Activated naive CD4-positive, alpha-beta T cell treated with anti-CD3 and anti-CD28 coated beads for 36 hours (primary cell): ENCODE measurements at regions of chr17 and their contacts with region 1.

Region 1: GRCh38 chr17:27601069-27601975 is 29.7 kb upstream of the LGALS9 start:
- DNase-seq: peak; percentile 91
- H3K4me3 Mint-ChIP-seq: no peak overlapping the region
- H3K27ac Mint-ChIP-seq: no peak overlapping the region
- H3K4me1 Mint-ChIP-seq: peaks cover 11% of the 10 kb centered on the region
- H3K27me3 Mint-ChIP-seq: no peaks in the 10 kb centered on the region

Region 2: DNA sequence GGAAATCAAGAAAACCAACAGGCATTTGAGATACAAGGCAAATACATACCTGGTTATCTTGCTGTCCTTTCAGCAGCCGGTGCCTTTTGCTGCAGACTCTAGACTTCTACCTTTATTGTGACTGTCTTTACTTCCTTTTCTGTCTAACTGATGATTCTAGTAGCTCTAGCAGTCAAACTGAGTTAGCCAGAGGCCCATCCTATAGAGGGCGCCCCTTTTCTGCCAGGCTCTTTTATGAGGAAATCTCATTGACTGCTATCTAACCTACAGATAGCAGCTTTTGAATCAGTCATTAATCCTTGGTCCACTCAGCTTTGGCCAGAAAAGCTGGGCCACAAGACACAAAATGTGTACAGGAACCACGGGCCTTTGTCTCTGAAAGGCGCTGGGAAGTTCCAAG is 394.9 kb before region 1 on chr17:
- CTCF ChIA-PET with region 1: no interaction called
- intact Hi-C with region 1: no loop called
- DNase-seq: peak; percentile 30
- H3K4me3 Mint-ChIP-seq: no peak overlapping the region
- H3K27ac Mint-ChIP-seq: no peak overlapping the region
- H3K4me1 Mint-ChIP-seq: peaks cover 5% of the 10 kb centered on the region
- H3K27me3 Mint-ChIP-seq: peaks cover 4% of the 10 kb centered on the region

Region 3: DNA sequence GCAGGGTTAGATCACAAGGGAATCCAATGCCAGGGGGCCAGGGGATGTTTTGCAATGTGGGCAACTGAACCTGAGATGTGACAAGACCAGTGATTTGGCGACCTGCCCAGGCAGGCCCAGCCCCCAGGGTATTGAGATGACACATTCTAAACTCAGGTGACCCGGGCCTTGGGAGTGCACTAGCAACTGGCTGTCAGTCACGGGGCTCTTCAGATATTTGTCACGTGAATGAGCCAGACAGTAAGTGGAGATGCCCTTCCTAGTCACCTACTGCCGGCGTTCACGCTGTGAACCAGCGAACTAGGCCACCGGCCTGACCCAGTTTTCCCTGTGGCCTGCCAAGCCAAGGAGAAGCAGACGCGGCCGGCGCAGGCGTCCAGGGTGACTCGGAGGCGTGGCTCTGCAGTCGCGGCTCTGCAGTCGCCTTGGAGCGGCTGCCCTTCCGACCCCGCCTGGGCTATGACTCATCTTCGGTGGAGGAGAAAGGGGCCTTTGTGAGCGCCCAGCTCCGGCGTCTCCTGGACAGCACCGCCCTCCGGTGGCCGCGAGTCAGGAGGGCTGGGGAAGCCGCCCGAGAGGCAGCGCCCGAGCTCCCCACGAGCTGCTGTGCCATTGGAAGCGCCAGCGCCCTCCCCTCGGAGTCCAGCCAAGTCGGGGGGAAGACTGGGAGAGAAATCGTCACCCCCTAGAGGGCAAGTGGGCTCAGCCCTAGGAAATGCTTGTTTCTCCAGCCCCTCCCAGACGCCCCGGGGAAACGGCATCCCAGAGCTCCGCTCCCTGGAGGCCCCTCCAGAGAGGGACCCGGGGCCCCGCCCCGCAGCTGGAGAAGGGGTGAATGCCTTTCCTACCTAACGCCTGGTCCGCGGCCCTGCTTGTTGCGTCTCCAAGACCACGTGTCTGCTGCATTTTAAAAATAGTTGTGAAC is 268.6 kb before region 1 on chr17:
- CTCF ChIA-PET with region 1: interaction called, 11 read pairs
- intact Hi-C with region 1: loop called (anchors 1 kb)
- DNase-seq: peak; percentile 97
- H3K4me3 Mint-ChIP-seq: peak overlapping the region; percentile 75
- H3K27ac Mint-ChIP-seq: peak overlapping the region; percentile 74
- H3K4me1 Mint-ChIP-seq: peaks cover 20% of the 10 kb centered on the region
- H3K27me3 Mint-ChIP-seq: peaks cover 3% of the 10 kb centered on the region

Region 4: GRCh38 chr17:27381007-27381501 is 220.3 kb before region 1 on chr17:
- CTCF ChIA-PET with region 1: interaction called, 108 read pairs
- intact Hi-C with region 1: loop called (anchors 1 kb)
- DNase-seq: peak; percentile 87
- H3K4me3 Mint-ChIP-seq: no peak overlapping the region
- H3K27ac Mint-ChIP-seq: no peak overlapping the region
- H3K4me1 Mint-ChIP-seq: no peaks in the 10 kb centered on the region
- H3K27me3 Mint-ChIP-seq: peaks cover 24% of the 10 kb centered on the region

Region 5: DNA sequence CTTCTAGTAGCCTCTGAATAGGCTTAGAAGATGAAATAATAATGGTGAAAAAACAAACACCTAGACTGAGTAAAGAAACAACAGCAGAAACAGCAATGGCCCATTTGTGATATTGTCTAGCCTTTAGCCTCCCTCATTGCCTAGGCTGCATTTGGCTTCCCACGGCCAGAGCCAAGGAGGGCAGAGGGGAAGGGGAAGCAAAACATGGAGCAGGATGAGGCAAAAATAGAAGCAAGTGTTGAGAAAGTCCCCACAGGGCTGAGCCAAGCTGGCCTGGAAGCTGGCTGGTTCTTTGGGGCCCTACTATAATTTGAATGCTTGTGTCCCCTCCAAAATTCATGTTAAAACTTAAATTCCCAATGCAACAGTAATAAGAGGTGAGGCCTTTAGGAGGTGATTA is 205.3 kb before region 1 on chr17:
- CTCF ChIA-PET with region 1: no interaction called
- intact Hi-C with region 1: no loop called
- DNase-seq: no peak
- H3K4me3 Mint-ChIP-seq: no peak overlapping the region
- H3K27ac Mint-ChIP-seq: no peak overlapping the region
- H3K4me1 Mint-ChIP-seq: no peaks in the 10 kb centered on the region
- H3K27me3 Mint-ChIP-seq: peaks cover 20% of the 10 kb centered on the region

Region 6: GRCh38 chr17:27466743-27467375 is 134.5 kb before region 1 on chr17:
- CTCF ChIA-PET with region 1: interaction called, 20 read pairs
- intact Hi-C with region 1: no loop called
- DNase-seq: peak; percentile 94
- H3K4me3 Mint-ChIP-seq: peak overlapping the region; percentile 67
- H3K27ac Mint-ChIP-seq: peak overlapping the region; percentile 98
- H3K4me1 Mint-ChIP-seq: peaks cover 88% of the 10 kb centered on the region
- H3K27me3 Mint-ChIP-seq: no peaks in the 10 kb centered on the region

Region 7: GRCh38 chr17:27490391-27490790 is 110.9 kb before region 1 on chr17:
- CTCF ChIA-PET with region 1: no interaction called
- intact Hi-C with region 1: no loop called
- DNase-seq: no peak
- H3K4me3 Mint-ChIP-seq: no peak overlapping the region
- H3K27ac Mint-ChIP-seq: no peak overlapping the region
- H3K4me1 Mint-ChIP-seq: peaks cover 37% of the 10 kb centered on the region
- H3K27me3 Mint-ChIP-seq: no peaks in the 10 kb centered on the region

Region 8: DNA sequence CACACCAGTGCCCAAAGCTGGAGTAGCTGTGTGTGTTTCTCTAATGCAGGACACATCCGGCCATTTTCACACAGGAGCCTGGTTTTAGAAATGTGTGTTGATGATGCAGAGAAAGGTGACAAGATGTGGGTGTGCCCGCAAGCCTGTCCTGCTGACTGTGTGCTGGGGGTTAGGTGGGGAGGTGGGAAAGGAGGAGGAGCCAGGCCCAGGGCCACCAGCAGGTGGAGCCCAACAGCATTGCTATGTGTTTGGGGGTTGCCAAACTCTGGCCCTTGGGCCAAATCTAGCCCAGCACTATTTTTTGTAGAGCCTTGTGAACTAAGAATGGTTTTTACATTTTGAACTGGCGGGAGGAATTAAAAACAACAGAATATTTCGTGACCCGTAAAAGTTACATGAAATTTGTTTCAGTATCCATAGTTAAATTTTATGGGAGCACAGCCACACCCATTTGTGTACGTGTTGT is 32.0 kb before region 1 on chr17:
- CTCF ChIA-PET with region 1: interaction called, 18 read pairs
- intact Hi-C with region 1: loop called (anchors 1 kb)
- DNase-seq: peak; percentile 71
- H3K4me3 Mint-ChIP-seq: no peak overlapping the region
- H3K27ac Mint-ChIP-seq: peak overlapping the region; percentile 47
- H3K4me1 Mint-ChIP-seq: peaks cover 71% of the 10 kb centered on the region
- H3K27me3 Mint-ChIP-seq: no peaks in the 10 kb centered on the region

Region 9: DNA sequence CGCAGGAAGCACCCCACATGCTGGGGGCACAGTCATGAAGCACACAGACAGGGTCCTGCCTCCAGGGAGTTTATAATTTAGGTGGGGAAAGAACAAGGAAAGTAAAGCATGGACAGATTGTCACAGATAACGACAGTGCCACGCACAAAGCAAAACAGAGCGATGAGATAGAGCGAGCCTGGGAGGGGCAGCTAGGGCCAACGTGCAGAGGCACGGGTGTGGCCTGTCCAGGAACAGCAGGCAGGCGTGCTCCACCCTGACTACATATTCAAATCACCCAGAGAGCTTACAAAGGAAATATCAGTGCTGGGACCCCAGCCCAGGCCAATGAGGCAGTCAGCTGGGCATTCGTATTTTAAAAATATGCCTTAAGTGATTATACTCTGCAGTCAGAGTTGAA is 46.4 kb after region 1 on chr17:
- CTCF ChIA-PET with region 1: interaction called, 124 read pairs
- intact Hi-C with region 1: loop called (anchors 1 kb)
- DNase-seq: no peak
- H3K4me3 Mint-ChIP-seq: no peak overlapping the region
- H3K27ac Mint-ChIP-seq: no peak overlapping the region
- H3K4me1 Mint-ChIP-seq: no peaks in the 10 kb centered on the region
- H3K27me3 Mint-ChIP-seq: no peaks in the 10 kb centered on the region

Region 10: GRCh38 chr17:27666831-27667560 is 65.7 kb after region 1 on chr17:
- CTCF ChIA-PET with region 1: no interaction called
- intact Hi-C with region 1: no loop called
- DNase-seq: no peak
- H3K4me3 Mint-ChIP-seq: no peak overlapping the region
- H3K27ac Mint-ChIP-seq: no peak overlapping the region
- H3K4me1 Mint-ChIP-seq: no peaks in the 10 kb centered on the region
- H3K27me3 Mint-ChIP-seq: no peaks in the 10 kb centered on the region